AG04450 (cell line): ENCODE measurements at regions of chr14 and their contacts with region 1.

Region 1: GRCh38 chr14:59271734-59272133 is 83.3 kb downstream of the DAAM1 start:
- DNase-seq: no peak
- H3K4me3 ChIP-seq: no peak overlapping the region
- H3K27ac ChIP-seq: no peak overlapping the region
- H3K27me3 ChIP-seq: no peaks in the 10 kb centered on the region
- CTCF ChIP-seq: no peak

Region 2: DNA sequence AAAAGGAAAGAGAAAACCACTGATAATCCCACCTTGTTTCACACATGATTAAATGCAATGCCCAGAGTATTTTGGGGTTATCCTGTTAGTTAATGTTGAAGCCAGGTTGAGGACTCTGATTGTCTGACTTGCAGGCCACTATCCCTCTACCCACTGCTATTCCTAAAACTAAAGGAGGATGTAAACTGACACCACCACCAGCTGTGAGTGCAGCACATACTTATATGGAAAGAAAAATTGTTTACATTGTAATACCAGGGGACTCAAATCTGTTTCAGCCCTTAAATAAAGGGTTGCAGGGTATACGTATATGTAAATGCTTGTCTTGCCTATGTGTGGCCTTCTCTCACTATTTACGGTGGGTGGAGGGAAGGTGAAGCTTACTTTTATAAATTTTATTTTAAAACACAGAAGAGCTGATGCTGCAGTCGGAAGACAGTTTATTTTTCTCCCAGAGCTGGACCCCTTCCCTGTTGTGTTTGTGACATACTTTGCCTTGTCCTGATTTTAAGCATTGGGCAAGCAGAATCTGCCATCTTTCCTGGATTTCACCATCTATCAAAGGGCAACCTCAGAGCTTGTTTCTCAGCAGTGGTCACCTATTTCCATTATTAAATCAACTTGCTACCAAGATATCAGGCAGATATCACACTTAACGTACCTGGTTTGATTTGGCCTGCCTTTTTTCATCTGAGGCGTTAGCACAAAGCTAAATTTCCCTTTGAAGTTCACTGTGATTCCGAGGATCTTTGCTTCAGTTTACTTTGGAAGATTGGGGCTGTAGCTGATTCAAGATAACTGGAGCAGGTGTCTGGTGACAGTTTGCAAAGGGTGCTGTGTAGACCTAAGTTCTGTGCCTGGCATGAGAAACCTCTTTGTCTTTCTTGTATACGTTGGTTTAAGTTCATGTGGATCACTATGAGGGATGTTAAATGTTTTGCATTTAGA is 58.1 kb before region 1 on chr14:
- CTCF ChIA-PET with region 1: no interaction called
- POLR2A ChIA-PET with region 1: interaction called, 10 read pairs
- DNase-seq: peak; percentile 23
- H3K4me3 ChIP-seq: no peak overlapping the region
- H3K27ac ChIP-seq: no peak overlapping the region
- H3K27me3 ChIP-seq: no peaks in the 10 kb centered on the region
- CTCF ChIP-seq: no peak

Region 3: GRCh38 chr14:59407246-59408010 is 135.7 kb after region 1 on chr14:
- CTCF ChIA-PET with region 1: no interaction called
- POLR2A ChIA-PET with region 1: no interaction called
- DNase-seq: peak; percentile 78
- H3K4me3 ChIP-seq: peak overlapping the region; percentile 23; the same call in 1 of the 2 replicates
- H3K27ac ChIP-seq: peak overlapping the region; percentile 83
- H3K27me3 ChIP-seq: no peaks in the 10 kb centered on the region
- CTCF ChIP-seq: no peak